CD8-positive, alpha-beta T cell (primary cell): ENCODE measurements at regions of chr16 and their contacts with region 1.

Region 1: GRCh38 chr16:2911580-2912329 is at the start of gene FLYWCH1:
- DNase-seq: peak; percentile 95 to 100 (median 99)
- ATAC-seq: peak; percentile 99
- H3K4me3 ChIP-seq: peak within 1 kb of the TSS; percentile 64 to 66
- H3K4me3 Mint-ChIP-seq: peak within 1 kb of the TSS; percentile 94
- H3K27ac ChIP-seq: peak within 1 kb of the TSS; percentile 59 to 71
- H3K27ac Mint-ChIP-seq: peak within 1 kb of the TSS; percentile 87
- H3K4me1 ChIP-seq: peaks cover 12% of the 10 kb centered on the region
- H3K4me1 Mint-ChIP-seq: peaks cover 21% of the 10 kb centered on the region
- H3K27me3 ChIP-seq: peaks cover 0 to 2% of the 10 kb centered on the region in 2 experiments
- H3K27me3 Mint-ChIP-seq: no peaks in the 10 kb centered on the region
- CTCF ChIP-seq: no peak
- total RNA-seq, gene FLYWCH1: 89.1 to 92.6 TPM

Region 2: DNA sequence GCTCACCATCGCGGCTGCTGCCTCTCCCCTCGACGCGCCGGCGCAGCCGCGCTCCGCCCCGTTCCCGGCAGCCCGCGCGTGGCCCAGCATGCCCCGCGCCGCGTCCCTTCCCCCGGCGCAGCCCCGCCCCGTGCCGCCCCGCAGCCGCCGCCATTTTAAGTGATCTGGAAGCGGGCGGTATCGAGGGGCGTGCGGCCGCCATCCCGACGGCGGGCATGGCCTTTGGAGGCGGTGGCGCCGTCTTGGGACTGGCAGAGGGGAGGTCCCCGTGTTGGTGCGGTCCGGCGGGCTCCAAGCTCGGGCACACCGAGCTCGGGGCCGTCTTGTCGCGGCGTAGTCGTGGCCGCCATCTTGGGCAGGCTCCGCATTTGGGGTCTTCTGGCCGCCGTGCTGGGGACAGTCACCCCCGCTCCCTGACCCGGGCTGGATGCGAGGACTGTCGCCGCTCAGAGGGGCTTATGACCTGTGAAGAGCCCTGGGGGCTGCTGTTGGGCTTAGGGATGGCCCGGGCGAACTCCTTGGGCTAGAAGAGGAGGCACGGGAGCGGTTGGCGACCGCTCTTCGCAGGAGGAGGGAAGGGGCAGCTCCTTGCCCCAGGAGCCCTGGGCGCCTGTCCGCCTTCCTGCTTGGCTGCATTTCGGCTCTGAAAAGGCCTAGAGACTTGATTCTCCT is 134.4 kb before region 1 on chr16 and contains the start of gene ELOB:
- CTCF ChIA-PET with region 1: no interaction called
- POLR2A ChIA-PET with region 1: interaction called, 4 read pairs
- intact Hi-C with region 1: loop called in 1 of 2 experiments (anchors 5 kb)
- DNase-seq: peak; percentile 78 to 94 (median 88)
- ATAC-seq: peak; percentile 90
- H3K4me3 ChIP-seq: peak within 1 kb of the TSS; percentile 84 to 92
- H3K4me3 Mint-ChIP-seq: peak within 1 kb of the TSS; percentile 95
- H3K27ac ChIP-seq: peak within 1 kb of the TSS; percentile 96 to 99
- H3K27ac Mint-ChIP-seq: peak within 1 kb of the TSS; percentile 98
- H3K4me1 ChIP-seq: peaks cover 30% of the 10 kb centered on the region
- H3K4me1 Mint-ChIP-seq: peaks cover 50% of the 10 kb centered on the region
- H3K27me3 ChIP-seq: no peaks in the 10 kb centered on the region
- H3K27me3 Mint-ChIP-seq: no peaks in the 10 kb centered on the region
- CTCF ChIP-seq: no peak
- total RNA-seq, gene ELOB: 70.3 to 71.5 TPM

Region 3: GRCh38 chr16:2838928-2839327 is 72.8 kb before region 1 on chr16:
- CTCF ChIA-PET with region 1: interaction called, 11 read pairs
- POLR2A ChIA-PET with region 1: no interaction called
- intact Hi-C with region 1: no loop called
- DNase-seq: peak; percentile 34 to 80 (median 63)
- ATAC-seq: peak; percentile 76
- H3K4me3 ChIP-seq: no peak overlapping the region
- H3K4me3 Mint-ChIP-seq: no peak overlapping the region
- H3K27ac ChIP-seq: no peak overlapping the region
- H3K27ac Mint-ChIP-seq: peak overlapping the region; percentile 64
- H3K4me1 ChIP-seq: peaks cover 49% of the 10 kb centered on the region
- H3K4me1 Mint-ChIP-seq: peaks cover 35% of the 10 kb centered on the region
- H3K27me3 ChIP-seq: peaks cover 0 to 4% of the 10 kb centered on the region in 2 experiments
- H3K27me3 Mint-ChIP-seq: peaks cover 10% of the 10 kb centered on the region
- CTCF ChIP-seq: peak; percentile 63

Region 4: DNA sequence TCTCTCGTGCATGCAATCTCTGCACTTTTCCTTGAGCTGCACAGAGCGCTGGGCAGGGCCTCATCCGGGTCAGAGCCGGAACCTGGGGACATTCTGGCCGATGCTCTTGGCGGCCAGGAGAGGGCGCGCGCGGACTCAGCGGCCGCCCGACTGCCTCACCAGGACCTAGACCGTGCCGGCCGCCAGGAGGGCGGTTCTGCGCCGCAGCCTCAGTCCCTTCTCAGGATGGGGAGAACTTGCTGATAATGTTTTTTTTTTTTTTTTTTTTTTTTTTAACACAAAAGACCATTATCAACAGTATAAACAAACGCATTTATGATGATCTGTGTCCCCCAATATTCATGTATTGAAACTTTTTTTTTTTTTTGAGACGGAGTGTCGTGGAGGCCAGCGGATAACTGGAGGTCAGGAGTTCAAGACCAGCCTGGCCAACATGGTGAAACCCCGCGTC is 36.8 kb before region 1 on chr16:
- CTCF ChIA-PET with region 1: interaction called, 11 read pairs
- POLR2A ChIA-PET with region 1: no interaction called
- intact Hi-C with region 1: no loop called
- DNase-seq: peak; percentile 37 to 86 (median 61)
- ATAC-seq: peak; percentile 100
- H3K4me3 ChIP-seq: no peak overlapping the region
- H3K4me3 Mint-ChIP-seq: no peak overlapping the region
- H3K27ac ChIP-seq: no peak overlapping the region
- H3K27ac Mint-ChIP-seq: no peak overlapping the region
- H3K4me1 ChIP-seq: no peaks in the 10 kb centered on the region
- H3K4me1 Mint-ChIP-seq: no peaks in the 10 kb centered on the region
- H3K27me3 ChIP-seq: no peaks in the 10 kb centered on the region
- H3K27me3 Mint-ChIP-seq: no peaks in the 10 kb centered on the region
- CTCF ChIP-seq: peak; percentile 98

Region 5: GRCh38 chr16:2883027-2883851 is 28.5 kb before region 1 on chr16 and contains the start of gene FLYWCH2:
- CTCF ChIA-PET with region 1: interaction called, 9 read pairs
- POLR2A ChIA-PET with region 1: interaction called, 23 read pairs
- intact Hi-C with region 1: loop called (anchors 1 kb)
- DNase-seq: peak; percentile 98 to 100 (median 99)
- ATAC-seq: peak; percentile 83
- H3K4me3 ChIP-seq: peak within 1 kb of the TSS; percentile 69 to 78
- H3K4me3 Mint-ChIP-seq: peak within 1 kb of the TSS; percentile 87
- H3K27ac ChIP-seq: peak within 1 kb of the TSS; percentile 90 to 94
- H3K27ac Mint-ChIP-seq: peak within 1 kb of the TSS; percentile 95
- H3K4me1 ChIP-seq: peaks cover 9% of the 10 kb centered on the region
- H3K4me1 Mint-ChIP-seq: peaks cover 17% of the 10 kb centered on the region
- H3K27me3 ChIP-seq: no peaks in the 10 kb centered on the region
- H3K27me3 Mint-ChIP-seq: no peaks in the 10 kb centered on the region
- CTCF ChIP-seq: no peak
- total RNA-seq, gene FLYWCH2: 9.3 to 10.9 TPM